Activated CD4-positive, alpha-beta memory T cell treated with anti-CD3 and anti-CD28 coated beads, Interleukin-2, amount 10 ng/mL, durations not matched to agents 7 days and 5 days (primary cell): ENCODE measurements at regions of chr2 and their contacts with region 1.

Region 1: GRCh38 chr2:191150600-191151330 is at the start of gene STAT4:
- DNase-seq: peak; percentile 84
- H3K4me3 Mint-ChIP-seq: peak within 1 kb of the TSS; percentile 94
- H3K27ac Mint-ChIP-seq: peak within 1 kb of the TSS; percentile 97
- H3K4me1 Mint-ChIP-seq: peaks cover 75% of the 10 kb centered on the region
- H3K27me3 Mint-ChIP-seq: no peaks in the 10 kb centered on the region
- total RNA-seq, gene STAT4: 122 to 124 TPM

Region 2: DNA sequence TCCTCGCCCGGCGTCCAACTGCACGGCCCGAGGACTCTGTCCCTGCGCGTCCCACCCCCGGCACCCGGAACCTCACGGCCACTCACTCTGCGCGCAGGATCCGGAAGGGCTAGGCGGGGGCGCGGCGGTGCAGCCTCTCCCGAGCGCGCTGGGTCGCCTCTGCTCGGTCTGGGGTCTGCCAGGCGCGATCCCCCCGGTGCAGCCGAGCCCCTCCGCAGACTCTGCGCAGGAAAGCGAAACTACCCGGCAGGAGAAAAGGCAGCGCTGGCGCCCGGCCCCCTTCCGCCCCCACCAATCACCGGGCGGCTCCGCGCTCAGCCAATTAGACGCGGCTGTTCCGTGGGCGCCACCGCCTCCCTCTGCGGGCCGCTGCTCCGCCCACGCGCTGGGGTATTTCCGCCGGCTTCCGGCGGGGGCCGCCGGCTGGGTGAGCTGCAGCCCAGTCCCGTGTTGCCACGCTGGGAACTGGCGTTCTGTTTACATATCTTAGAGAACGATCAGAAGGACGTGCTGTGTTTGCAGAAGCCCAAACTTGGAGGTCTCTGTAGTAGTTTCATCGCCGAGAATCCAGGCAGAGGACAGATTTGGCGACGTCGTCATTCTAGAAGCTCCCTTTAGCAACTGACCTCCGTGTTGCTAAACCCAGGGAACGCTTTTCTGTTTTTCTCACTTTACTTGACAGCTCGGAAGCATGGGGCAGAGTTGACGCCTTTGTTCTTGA is 136.7 kb before region 1 on chr2 and contains the start of gene STAT1:
- CTCF ChIA-PET with region 1: interaction called, 10 read pairs
- POLR2A ChIA-PET with region 1: interaction called, 37 read pairs
- DNase-seq: peak; percentile 96
- H3K4me3 Mint-ChIP-seq: no peak within 1 kb of the TSS
- H3K27ac Mint-ChIP-seq: no peak within 1 kb of the TSS
- H3K4me1 Mint-ChIP-seq: peaks cover 44% of the 10 kb centered on the region
- H3K27me3 Mint-ChIP-seq: no peaks in the 10 kb centered on the region
- total RNA-seq, gene STAT1: 540 to 547 TPM

Region 3: GRCh38 chr2:191030521-191031154 is 120.1 kb before region 1 on chr2:
- CTCF ChIA-PET with region 1: interaction called, 11 read pairs
- POLR2A ChIA-PET with region 1: interaction called, 6 read pairs
- DNase-seq: peak; percentile 36
- H3K4me3 Mint-ChIP-seq: peak overlapping the region; percentile 7
- H3K27ac Mint-ChIP-seq: peak overlapping the region; percentile 69
- H3K4me1 Mint-ChIP-seq: peaks cover 59% of the 10 kb centered on the region
- H3K27me3 Mint-ChIP-seq: no peaks in the 10 kb centered on the region

Region 4: GRCh38 chr2:191051825-191052778 is 98.7 kb before region 1 on chr2:
- CTCF ChIA-PET with region 1: interaction called, 512 read pairs
- POLR2A ChIA-PET with region 1: interaction called, 62 read pairs
- DNase-seq: no peak
- H3K4me3 Mint-ChIP-seq: no peak overlapping the region
- H3K27ac Mint-ChIP-seq: no peak overlapping the region
- H3K4me1 Mint-ChIP-seq: peaks cover 28% of the 10 kb centered on the region
- H3K27me3 Mint-ChIP-seq: no peaks in the 10 kb centered on the region

Region 5: DNA sequence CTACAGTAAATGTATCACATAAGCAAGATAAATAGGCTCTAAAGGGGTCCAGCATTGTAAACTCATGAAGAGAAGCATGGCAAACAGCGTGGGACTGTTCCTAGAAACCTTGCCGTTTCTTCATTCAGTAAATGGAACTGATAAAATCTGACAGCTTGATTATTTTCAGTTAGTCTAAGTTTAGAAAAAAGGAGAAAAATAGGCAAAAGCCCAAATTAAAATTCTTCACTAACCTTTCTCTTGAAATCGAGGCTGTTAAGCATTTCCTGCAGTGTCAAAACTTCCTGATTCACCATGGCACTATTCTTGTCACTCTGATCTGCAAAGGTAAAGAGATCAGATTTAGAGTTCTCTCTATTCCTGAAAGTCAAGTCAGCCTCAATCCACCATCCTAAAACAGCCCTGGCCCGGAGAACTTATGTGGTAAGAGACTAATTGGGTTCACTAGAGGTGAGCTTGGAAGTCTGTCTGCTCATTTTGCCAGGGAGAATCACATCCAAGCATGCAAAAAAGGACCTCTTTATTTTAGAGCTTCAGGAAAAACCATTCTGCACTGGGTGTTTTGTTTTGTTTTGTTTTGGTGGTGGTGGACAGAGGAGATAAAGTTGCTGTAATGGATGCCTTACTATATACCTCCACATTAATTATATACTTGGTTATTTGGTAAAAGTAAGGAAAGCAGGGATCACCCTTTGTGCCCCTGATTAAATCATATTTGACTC is 84.4 kb before region 1 on chr2:
- CTCF ChIA-PET with region 1: interaction called, 50 read pairs
- POLR2A ChIA-PET with region 1: interaction called, 165 read pairs
- DNase-seq: peak; percentile 23
- H3K4me3 Mint-ChIP-seq: peak overlapping the region; percentile 80
- H3K27ac Mint-ChIP-seq: peak overlapping the region; percentile 84
- H3K4me1 Mint-ChIP-seq: peaks cover 78% of the 10 kb centered on the region
- H3K27me3 Mint-ChIP-seq: no peaks in the 10 kb centered on the region

Region 6: DNA sequence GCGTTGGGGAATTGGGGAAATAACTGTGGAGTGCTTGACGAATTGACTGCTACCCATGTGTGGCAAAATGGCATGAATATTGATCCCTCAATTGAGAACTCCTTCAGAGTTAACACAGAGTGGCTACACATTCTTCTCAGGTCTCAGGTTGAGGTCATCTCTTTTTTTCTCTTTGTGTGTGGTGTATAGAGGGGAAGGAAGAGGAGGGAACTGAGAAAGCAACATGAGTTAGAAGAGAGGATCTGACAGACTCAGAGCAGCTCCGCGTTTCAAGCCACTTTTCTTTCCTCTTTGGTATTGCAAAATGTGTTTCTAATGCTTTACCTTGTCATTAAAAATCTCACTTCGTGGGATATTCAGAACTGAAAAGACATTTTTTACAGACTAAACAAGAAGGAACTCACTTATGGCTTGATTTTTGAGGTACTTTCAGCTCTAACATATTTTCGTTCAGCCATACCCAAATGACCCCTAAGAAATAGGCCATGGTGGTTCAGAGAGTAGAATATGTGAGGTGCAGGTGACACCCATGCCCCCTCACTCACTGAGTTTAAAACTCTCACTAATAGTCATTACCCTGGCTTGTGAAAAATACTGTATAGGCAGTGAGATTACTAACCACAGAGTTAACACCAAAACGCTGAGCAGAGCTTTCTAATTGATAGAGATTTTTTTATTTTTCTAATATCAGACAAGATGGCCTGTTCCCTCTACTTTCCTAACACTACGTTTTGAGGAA is 22.4 kb before region 1 on chr2:
- CTCF ChIA-PET with region 1: interaction called, 18 read pairs
- POLR2A ChIA-PET with region 1: interaction called, 35 read pairs
- DNase-seq: no peak
- H3K4me3 Mint-ChIP-seq: peak overlapping the region; percentile 60
- H3K27ac Mint-ChIP-seq: peak overlapping the region; percentile 71
- H3K4me1 Mint-ChIP-seq: peaks cover 59% of the 10 kb centered on the region
- H3K27me3 Mint-ChIP-seq: no peaks in the 10 kb centered on the region

Region 7: DNA sequence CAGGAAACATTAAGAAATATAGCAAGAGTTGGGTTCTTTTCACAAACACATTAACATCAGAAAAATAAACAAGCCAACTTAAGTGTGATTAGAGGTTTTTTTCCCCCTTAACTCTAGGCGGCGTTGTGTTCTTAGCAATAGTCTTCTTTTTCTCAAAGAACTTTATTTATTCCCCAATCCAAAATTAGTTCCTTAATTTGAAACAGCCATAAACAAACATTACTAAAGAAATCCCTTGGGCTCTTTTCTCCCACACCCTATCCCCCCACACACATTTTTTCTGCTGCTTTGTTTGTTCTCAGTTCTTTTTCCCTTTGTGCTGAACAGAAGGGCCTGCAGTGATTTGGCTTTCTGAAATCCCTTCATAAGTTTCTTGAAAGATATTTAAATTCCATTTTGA is 81.2 kb after region 1 on chr2:
- CTCF ChIA-PET with region 1: no interaction called
- POLR2A ChIA-PET with region 1: no interaction called
- DNase-seq: no peak
- H3K4me3 Mint-ChIP-seq: no peak overlapping the region
- H3K27ac Mint-ChIP-seq: no peak overlapping the region
- H3K4me1 Mint-ChIP-seq: no peaks in the 10 kb centered on the region
- H3K27me3 Mint-ChIP-seq: no peaks in the 10 kb centered on the region